Body of pancreas (tissue), 4 donors: ENCODE measurements at regions of chr17 and their contacts with region 1.

Region 1: DNA sequence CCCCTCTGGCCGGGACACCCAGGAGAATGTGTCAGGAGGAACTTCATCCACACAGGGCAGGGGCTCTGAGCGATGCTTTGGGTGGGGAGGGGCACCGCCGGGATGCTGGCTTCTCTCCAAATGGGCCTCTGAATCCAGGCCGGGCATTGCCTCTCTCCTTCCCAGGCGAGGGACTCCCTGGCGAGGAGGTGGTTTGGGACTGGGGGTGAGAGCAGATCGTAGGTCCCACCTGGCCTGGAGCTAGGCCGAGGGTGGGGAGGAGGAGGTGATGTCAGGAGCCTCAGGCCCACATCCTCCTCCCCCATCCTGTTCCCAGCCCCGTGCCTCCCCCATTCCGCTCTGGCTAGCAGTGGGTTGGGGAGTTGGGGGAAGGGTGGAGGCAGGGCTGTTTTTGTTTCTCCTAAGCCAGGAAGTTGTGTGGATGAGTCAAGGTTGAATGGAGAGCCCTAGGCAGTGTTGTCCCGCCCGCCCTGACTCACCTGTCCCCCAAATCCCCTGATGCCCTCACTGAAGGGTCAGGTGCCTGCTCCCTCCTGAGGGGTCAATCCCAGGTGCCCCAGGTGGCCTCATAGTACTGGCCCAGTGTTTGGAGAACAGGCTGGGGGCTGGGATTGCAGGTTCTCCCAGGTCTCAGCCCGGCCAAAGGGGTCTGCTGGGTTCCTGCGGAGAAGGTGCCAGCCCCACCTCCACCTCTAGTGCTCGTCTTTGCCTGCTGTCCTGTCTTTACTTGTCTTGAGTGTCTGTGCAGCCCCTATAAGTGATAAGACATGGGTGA is 2.8 kb downstream of the GRB7 start:
- DNase-seq: peak in 3 of 4 donors; percentile 41 to 57 (median 49)
- ATAC-seq: no peak
- H3K4me3 ChIP-seq: peak overlapping the region in 1 of 2 donors; percentile 9
- H3K27ac ChIP-seq: peak overlapping the region; percentile 95 to 99 (median 98)
- H3K4me1 ChIP-seq: peaks cover 45% of the 10 kb centered on the region
- H3K27me3 ChIP-seq: no peaks in the 10 kb centered on the region
- CTCF ChIP-seq: no peak
- POLR2A ChIP-seq: peak in 2 of 3 donors; percentile 11 to 61

Region 2: GRCh38 chr17:39401412-39402243 is 338.9 kb before region 1 on chr17 and contains the start of gene FBXL20:
- intact Hi-C with region 1: no loop called
- DNase-seq: peak; percentile 92 to 96 (median 94)
- ATAC-seq: peak; percentile 91
- H3K4me3 ChIP-seq: peak within 1 kb of the TSS; percentile 82 to 94
- H3K27ac ChIP-seq: peak within 1 kb of the TSS; percentile 74 to 92 (median 82)
- H3K4me1 ChIP-seq: peaks cover 27% of the 10 kb centered on the region
- H3K27me3 ChIP-seq: no peaks in the 10 kb centered on the region
- CTCF ChIP-seq: peak in 2 of 7 experiments; percentile 4 to 5
- POLR2A ChIP-seq: peak; percentile 65 to 92 (median 90)
- total RNA-seq, gene FBXL20: 6.7 to 11.9 TPM

Region 3: GRCh38 chr17:39687811-39688518 is 52.6 kb before region 1 on chr17 and contains the start of gene PGAP3:
- intact Hi-C with region 1: loop called (anchors 10 kb)
- DNase-seq: peak; percentile 84 to 94 (median 87)
- ATAC-seq: peak; percentile 93
- H3K4me3 ChIP-seq: peak within 1 kb of the TSS; percentile 58 to 65
- H3K27ac ChIP-seq: peak within 1 kb of the TSS; percentile 78 to 93 (median 88)
- H3K4me1 ChIP-seq: peaks cover 21% of the 10 kb centered on the region
- H3K27me3 ChIP-seq: no peaks in the 10 kb centered on the region
- CTCF ChIP-seq: no peak
- POLR2A ChIP-seq: peak in 2 of 3 donors; percentile 67 to 71
- total RNA-seq, gene PGAP3: 13.8 to 33.2 TPM